ENCODE measurements at regions of chr1 and their contacts with region 1.

Region 1: GRCh38 chr1:89762779-89763648 is 57.8 kb upstream of the LRRC8D start:
- DNase-seq: peak; percentile 53 to 74
- H3K4me3 ChIP-seq: peak overlapping the region; percentile 43; the same call in 1 of the 2 replicates
- H3K27ac ChIP-seq: no peak overlapping the region
- H3K4me1 ChIP-seq: peaks cover 5% of the 10 kb centered on the region
- H3K27me3 ChIP-seq: no peaks in the 10 kb centered on the region
- CTCF ChIP-seq: peak; percentile 98

Region 2: DNA sequence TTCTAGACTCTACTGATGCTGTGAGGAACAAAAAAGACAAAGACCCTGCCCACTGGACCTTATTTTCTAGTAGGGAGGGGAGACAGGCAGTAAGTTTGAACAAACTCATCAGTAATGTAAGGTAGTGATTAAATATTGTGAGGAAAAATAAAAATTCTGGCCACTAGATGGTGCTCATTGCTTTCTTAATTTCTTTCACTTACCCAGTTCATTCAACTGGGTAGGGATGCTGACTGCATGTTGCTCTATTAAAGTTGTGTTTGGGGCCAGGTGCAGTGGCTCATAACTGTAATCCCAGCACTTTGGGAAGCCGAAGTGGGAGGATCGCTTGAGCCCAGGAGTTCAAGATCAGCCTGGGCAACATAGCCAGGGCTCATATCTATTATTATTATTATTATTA is 764.3 kb before region 1 on chr1:
- CTCF ChIA-PET with region 1: no interaction called
- POLR2A ChIA-PET with region 1: no interaction called
- intact Hi-C with region 1: loop called (anchors 5 kb)
- DNase-seq: peak in 1 of 2 experiments; percentile 64
- H3K4me3 ChIP-seq: no peak overlapping the region
- H3K27ac ChIP-seq: no peak overlapping the region
- H3K4me1 ChIP-seq: peaks cover 4% of the 10 kb centered on the region; the same call in 1 of the 2 replicates
- H3K27me3 ChIP-seq: no peaks in the 10 kb centered on the region
- CTCF ChIP-seq: peak; percentile 87

Region 3: GRCh38 chr1:89358287-89358893 is 404.6 kb before region 1 on chr1:
- CTCF ChIA-PET with region 1: no interaction called
- POLR2A ChIA-PET with region 1: no interaction called
- intact Hi-C with region 1: loop called (anchors 5 kb)
- DNase-seq: peak; percentile 63 to 65
- H3K4me3 ChIP-seq: no peak overlapping the region
- H3K27ac ChIP-seq: no peak overlapping the region
- H3K4me1 ChIP-seq: 0 out of 2 replicates have a peak, but pooled peaks cover 6% of the 10 kb centered on the region
- H3K27me3 ChIP-seq: no peaks in the 10 kb centered on the region
- CTCF ChIP-seq: peak; percentile 89

Region 4: GRCh38 chr1:89483010-89483756 is 279.8 kb before region 1 on chr1:
- CTCF ChIA-PET with region 1: interaction called, 16 read pairs
- POLR2A ChIA-PET with region 1: interaction called, 8 read pairs
- intact Hi-C with region 1: loop called (anchors 1 kb)
- DNase-seq: peak; percentile 43 to 72
- H3K4me3 ChIP-seq: no peak overlapping the region
- H3K27ac ChIP-seq: no peak overlapping the region
- H3K4me1 ChIP-seq: no peaks in the 10 kb centered on the region
- H3K27me3 ChIP-seq: no peaks in the 10 kb centered on the region
- CTCF ChIP-seq: peak; percentile 94

Region 5: DNA sequence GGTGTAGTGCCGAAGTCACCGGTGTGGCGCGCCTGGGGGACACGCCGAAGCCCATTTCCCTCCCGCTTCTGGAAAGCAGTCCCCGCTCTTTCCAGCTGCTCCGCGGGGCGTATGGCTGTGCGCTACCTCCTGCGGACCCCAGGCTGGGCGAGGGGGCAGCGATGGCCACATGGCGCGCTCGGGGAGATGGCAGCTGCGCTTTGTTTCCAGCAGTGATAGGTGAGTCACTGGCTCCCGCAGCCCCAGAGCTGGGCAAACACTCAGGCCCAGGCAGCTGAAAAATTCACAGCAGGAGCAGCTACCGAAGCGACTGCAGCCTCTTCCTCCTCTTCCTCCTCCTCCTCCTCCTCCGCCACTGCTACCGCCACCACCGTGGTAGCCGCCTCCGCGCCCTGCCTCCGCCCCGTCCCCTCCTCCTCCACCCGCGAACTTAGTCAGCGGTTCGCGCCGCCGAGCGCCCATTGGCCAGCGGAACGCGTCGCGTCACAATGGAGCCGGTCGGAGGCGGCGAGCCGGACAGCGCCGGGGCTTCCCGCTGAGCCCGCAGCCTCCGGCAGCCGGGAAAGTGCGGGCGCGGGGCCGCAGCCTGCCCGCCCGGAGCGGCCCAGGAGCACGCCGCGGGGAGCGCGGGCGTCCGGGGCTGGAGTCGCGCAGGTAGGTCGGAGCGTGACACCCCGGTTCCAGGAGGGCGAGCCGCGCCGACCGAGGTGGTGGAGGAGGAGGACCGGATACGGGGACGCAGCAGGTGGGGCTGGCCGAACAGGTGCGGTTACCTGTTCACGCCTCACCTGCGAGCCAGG is 238.4 kb before region 1 on chr1 and contains the start of gene LRRC8B:
- CTCF ChIA-PET with region 1: no interaction called
- POLR2A ChIA-PET with region 1: no interaction called
- intact Hi-C with region 1: loop called (anchors 2 kb)
- DNase-seq: peak; percentile 84 to 91
- H3K4me3 ChIP-seq: peak within 1 kb of the TSS; percentile 77
- H3K27ac ChIP-seq: peak within 1 kb of the TSS; percentile 92
- H3K4me1 ChIP-seq: peaks cover 36% of the 10 kb centered on the region
- H3K27me3 ChIP-seq: no peaks in the 10 kb centered on the region
- CTCF ChIP-seq: no peak
- total RNA-seq, gene LRRC8B: 11.7 and 15.0 TPM in 2 replicates

Region 6: GRCh38 chr1:89598450-89599331 is 164.3 kb before region 1 on chr1:
- CTCF ChIA-PET with region 1: interaction called, 4 read pairs
- POLR2A ChIA-PET with region 1: no interaction called
- intact Hi-C with region 1: loop called (anchors 2 kb)
- DNase-seq: no peak
- H3K4me3 ChIP-seq: no peak overlapping the region
- H3K27ac ChIP-seq: no peak overlapping the region
- H3K4me1 ChIP-seq: no peaks in the 10 kb centered on the region
- H3K27me3 ChIP-seq: no peaks in the 10 kb centered on the region
- CTCF ChIP-seq: peak; percentile 81

Region 7: DNA sequence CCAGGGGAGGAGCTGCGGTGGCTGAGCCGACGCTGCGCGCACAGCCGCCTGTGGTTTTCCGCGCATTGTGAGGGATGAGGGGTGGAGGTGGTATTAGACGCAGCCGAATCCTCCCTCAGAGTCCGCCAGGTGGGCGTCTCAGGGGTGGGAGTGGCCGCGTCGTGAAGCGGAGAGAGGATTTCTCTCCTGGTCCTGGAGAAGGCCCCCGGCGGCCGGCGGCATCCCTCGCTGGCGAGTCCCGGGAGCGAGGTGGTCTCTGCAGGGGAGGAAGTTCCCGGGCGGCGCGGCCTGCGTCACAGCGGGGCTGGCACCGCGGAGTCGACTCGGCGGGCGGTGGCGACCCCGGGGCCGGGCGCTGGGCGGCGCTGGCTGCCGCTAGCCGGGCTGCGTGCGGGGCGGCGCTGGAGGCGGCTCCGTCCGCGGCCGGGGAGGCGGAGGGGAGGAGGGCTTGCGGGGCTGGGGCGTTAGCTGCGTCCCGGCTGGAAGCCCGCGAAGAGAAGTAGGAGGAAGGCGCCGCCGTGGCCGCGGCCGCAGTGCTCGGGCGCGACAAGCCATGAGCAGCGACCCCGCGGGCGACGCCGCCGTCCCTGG is 130.3 kb before region 1 on chr1 and contains the start of gene LRRC8C:
- CTCF ChIA-PET with region 1: no interaction called
- POLR2A ChIA-PET with region 1: no interaction called
- intact Hi-C with region 1: loop called (anchors 2 kb)
- DNase-seq: peak in 1 of 2 experiments; percentile 81
- H3K4me3 ChIP-seq: peak within 1 kb of the TSS; percentile 77
- H3K27ac ChIP-seq: no peak within 1 kb of the TSS
- H3K4me1 ChIP-seq: peaks cover 37% of the 10 kb centered on the region
- H3K27me3 ChIP-seq: no peaks in the 10 kb centered on the region
- CTCF ChIP-seq: no peak; the same call in 1 of the 2 replicates
- total RNA-seq, gene LRRC8C: 2.0 and 2.2 TPM in 2 replicates

Region 8: GRCh38 chr1:89708751-89709375 is 54.2 kb before region 1 on chr1:
- CTCF ChIA-PET with region 1: no interaction called
- POLR2A ChIA-PET with region 1: no interaction called
- intact Hi-C with region 1: no loop called
- DNase-seq: no peak
- H3K4me3 ChIP-seq: no peak overlapping the region
- H3K27ac ChIP-seq: no peak overlapping the region
- H3K4me1 ChIP-seq: no peaks in the 10 kb centered on the region
- H3K27me3 ChIP-seq: no peaks in the 10 kb centered on the region
- CTCF ChIP-seq: no peak

Region 9: DNA sequence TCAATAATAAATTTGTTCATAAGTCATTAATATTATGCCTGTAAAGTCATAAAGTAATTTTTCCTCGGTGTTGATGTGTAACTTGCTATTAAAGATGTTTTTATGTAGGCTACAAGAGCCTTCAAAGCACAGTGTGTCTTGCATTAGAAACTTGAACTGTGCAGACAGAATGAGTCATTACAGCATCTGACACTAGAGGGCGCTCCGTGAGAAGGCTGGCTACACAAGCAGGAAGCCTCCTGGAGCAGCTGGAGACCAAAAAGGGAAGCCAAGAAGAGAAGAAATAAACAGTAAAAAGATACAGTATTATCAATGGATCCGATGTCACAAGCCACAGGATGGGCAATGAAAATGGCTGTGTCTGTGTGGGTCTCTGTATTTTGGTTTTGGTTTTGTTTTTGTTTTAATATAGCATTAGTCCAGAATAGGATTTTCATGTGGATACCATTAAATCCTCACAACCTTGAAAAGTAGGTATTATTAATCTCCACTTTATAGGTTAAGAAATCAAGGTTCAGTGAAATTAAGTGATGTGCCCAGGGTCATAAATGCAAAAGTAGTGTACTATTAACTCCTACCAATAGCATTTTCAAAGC is 41.7 kb after region 1 on chr1:
- CTCF ChIA-PET with region 1: no interaction called
- POLR2A ChIA-PET with region 1: no interaction called
- intact Hi-C with region 1: no loop called
- DNase-seq: peak; percentile 76 to 81
- H3K4me3 ChIP-seq: no peak overlapping the region
- H3K27ac ChIP-seq: no peak overlapping the region
- H3K4me1 ChIP-seq: peaks cover 36% of the 10 kb centered on the region
- H3K27me3 ChIP-seq: no peaks in the 10 kb centered on the region
- CTCF ChIP-seq: peak; percentile 100